ENCODE measurements at regions of chr1 and their contacts with region 1.

Region 1: DNA sequence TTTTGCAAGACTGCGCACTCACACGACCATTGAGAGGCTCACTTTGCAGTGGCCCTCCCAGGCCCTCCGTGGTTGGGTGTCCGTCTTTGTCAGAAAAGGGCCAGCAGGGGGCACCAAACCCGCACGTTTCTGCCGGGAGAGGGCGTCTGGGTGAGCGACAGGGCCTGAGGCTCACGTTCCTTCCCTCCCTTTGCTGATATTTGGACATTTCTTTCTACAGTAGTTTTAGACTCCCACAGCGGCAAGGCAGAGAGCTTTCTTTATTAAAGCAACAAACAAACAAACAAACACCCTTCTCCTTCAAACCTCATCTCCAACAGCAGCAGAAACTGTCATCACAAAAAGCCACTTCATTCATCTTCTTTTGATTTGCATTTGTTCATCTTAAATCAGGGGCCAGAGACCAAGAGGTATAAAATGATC is 79.2 kb upstream of the WDR26 start:
- DNase-seq: peak; percentile 88
- CTCF ChIP-seq: peak; percentile 93

Region 2: GRCh38 chr1:224458996-224459395 is 54.8 kb before region 1 on chr1:
- CTCF ChIA-PET with region 1: interaction called, 19 read pairs
- POLR2A ChIA-PET with region 1: no interaction called
- DNase-seq: no peak
- CTCF ChIP-seq: no peak

Region 3: GRCh38 chr1:224497714-224498573 is 15.9 kb before region 1 on chr1:
- CTCF ChIA-PET with region 1: interaction called, 53 read pairs
- POLR2A ChIA-PET with region 1: no interaction called
- DNase-seq: peak; percentile 84
- CTCF ChIP-seq: no peak

Region 4: GRCh38 chr1:224528900-224529299 is 15.1 kb after region 1 on chr1:
- CTCF ChIA-PET with region 1: interaction called, 50 read pairs
- POLR2A ChIA-PET with region 1: no interaction called
- DNase-seq: no peak
- CTCF ChIP-seq: no peak

Region 5: DNA sequence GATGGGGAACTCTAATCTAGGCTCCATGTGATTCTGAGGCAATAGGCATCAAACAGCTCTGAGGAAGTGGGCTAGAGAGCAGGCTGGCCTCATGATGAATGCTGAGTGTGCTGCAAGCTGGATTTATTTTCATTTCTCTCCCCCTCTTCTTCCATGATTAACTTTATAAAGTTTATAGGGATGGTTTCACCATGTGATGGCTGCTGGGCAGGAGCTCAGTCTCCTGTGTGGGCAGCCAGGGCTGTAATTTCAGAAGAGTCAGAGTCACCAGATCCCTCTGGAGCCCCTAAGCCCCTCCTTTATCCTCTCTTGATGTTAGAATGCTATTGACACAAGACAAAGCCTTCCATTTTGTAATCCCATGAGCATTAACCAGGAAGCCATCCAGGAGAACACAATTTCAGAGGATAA is 245.9 kb after region 1 on chr1:
- CTCF ChIA-PET with region 1: no interaction called
- POLR2A ChIA-PET with region 1: no interaction called
- DNase-seq: no peak
- CTCF ChIP-seq: no peak

Region 6: DNA sequence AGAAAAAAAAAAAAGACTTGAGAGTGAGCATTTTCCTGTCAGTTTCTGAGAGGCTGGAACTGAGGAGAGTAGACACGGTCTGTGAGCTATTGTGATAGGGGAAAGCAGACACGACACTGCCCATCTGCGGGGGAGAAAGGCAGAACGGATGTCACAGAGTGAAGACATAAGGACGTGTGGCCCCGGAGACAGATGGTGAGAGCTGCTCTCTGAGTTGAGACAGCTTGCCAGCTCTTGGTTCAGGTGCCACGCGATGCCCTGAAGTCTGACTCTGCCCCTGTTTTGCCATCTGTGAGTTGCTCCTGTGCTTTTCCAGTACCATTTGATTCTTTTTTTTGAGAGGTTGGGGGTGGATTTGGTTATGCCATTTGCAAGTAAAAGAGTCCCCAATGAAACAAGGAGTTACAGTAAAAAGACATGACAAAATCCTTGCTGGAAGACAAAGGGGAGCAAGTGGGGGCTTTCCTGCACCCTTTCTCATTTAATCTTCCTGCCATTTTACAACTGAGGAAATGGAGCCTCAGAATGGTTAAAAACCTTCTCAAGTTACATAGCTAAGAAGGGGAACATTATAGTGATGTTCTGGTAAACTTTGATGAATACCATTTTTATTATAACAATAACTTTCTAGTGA is 286.8 kb after region 1 on chr1:
- CTCF ChIA-PET with region 1: no interaction called
- POLR2A ChIA-PET with region 1: no interaction called
- DNase-seq: no peak
- CTCF ChIP-seq: no peak

Region 7: DNA sequence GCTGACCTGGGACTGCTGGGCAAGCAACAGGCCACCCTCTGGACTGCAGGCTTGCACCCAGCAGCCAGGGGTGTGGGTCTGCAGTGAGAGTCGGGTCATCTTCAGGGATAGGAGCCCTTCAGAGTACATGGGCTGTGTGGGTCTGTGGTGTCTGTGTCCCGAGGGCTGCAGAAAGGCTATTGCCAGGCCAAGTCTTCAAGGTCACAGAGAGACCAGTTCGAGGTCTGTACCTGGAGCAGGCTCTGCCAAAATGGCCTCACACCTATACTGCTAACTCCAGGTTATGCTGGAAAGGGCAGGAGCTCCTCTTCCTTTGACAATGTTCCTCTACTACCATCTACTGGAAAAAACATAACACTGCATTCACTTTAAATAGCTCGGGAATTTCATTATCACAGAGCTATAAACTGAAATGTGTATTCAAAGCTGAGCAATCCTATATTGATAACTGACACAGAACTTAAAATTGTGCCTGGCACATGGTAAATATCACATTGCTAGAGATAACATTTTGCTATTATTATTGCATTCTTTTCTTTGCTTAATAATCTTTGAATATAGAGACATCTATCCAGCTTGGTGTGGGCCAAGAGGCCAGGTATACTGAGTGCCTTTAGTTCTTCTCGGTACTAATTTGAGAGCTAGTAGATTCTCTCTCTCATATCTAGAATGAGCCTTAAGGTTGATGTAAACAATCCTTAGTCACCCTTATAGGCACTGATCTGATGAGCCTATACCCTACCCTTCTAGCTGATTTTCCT is 408.8 kb after region 1 on chr1:
- CTCF ChIA-PET with region 1: interaction called, 63 read pairs
- POLR2A ChIA-PET with region 1: no interaction called
- DNase-seq: peak; percentile 56
- CTCF ChIP-seq: peak; percentile 54